GM12878 (cell line): ENCODE measurements at regions of chr17 and their contacts with region 1.

Region 1: DNA sequence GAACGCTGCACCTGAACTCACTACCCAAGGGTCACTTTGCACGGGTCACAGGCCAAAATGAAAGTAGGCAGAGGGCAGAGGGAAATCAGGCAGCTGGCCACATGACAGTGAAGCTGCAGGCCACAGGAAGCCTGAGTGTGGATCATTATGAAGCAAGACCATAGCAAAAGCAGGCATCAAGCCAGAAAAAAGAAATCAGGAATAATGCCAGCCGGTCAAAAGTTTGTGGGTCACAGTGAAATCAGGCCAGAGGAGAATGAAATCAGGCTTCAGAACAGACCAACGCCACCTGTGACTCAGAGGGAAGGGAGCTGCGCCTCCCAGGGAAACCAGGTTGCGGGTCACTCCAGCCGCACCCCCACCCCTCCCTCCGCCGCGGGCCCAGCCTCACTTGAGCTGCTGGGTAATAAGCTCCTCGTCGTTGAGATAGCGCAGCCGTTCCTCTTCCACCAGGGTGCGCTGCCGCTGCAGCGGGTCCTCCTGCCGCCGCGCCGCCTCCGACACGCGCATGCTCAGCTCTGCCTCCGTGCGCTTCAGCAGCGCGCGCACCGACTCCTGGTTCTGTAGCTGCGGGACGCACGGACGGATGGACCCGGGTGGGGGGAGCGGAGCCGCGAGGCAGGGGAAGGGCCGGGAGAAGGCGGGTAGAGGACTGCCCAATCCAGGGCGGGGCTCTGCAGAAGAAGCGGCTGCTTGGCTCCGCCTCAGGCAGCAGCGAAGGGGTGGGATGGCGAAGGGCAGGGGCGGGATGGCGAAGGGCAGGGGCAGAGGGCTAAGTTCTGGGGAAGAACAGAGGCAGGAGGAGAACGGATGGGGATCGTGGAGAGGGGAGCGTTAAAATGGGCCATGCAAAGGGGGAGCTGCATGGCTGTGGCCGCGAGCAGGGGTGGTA is 47.7 kb downstream of the SRCIN1 start:
- DNase-seq: peak; percentile 50
- ATAC-seq: peak; percentile 90
- H3K4me3 ChIP-seq: peak overlapping the region; percentile 60; the same call in 1 of the 2 replicates
- H3K27ac ChIP-seq: no peak overlapping the region
- H3K4me1 ChIP-seq: peaks cover 20% of the 10 kb centered on the region
- H3K27me3 ChIP-seq: peaks cover 15% of the 10 kb centered on the region in 2 experiments
- CTCF ChIP-seq: peak; percentile 93 to 99 (median 96); a peak in 5 of 6 replicates
- EP300 ChIP-seq: no peak
- POLR2A ChIP-seq: no peak
- RAD21 ChIP-seq: peak; percentile 69

Region 2: DNA sequence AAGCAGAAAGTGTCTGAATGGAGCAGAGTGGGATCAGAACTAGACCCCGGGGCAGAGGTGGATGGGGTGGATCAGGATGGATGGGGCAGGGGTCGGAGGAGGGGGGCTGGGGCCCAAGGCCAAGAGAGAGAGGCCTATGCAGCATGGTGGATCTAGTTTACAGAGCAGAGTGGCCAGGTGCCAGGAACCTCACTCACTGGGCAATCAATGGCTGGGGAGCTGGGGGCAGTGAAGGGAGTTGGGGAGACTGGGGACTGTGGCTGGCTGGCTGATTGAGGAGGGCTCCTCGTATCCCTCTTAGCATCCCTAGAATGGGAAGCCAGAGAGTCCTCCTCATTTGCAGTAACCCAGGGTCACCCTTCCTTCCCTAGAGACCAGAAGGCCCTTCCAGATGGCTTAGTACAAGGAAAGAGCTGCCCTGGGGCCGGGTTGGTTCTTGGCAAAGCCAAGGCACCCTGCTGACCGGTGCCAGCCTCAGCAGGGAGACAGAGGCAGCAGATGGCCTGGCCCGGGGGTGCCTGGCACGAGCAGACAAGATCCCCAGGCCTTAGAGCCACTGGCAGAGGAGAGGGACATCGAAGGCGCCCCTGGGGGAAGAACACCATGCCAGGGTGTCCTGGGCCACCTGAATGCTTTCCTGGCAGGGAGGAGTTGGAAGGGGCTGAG is 10.9 kb after region 1 on chr17:
- CTCF ChIA-PET with region 1: interaction called, 15 read pairs
- POLR2A ChIA-PET with region 1: interaction called, 8 read pairs
- RAD21 ChIA-PET with region 1: interaction called, 14 read pairs
- SMC1A ChIA-PET with region 1: interaction called, 3 read pairs
- in situ Hi-C with region 1: no loop called
- intact Hi-C with region 1: no loop called
- DNase-seq: no peak
- ATAC-seq: no peak
- H3K4me3 ChIP-seq: no peak overlapping the region
- H3K27ac ChIP-seq: no peak overlapping the region
- H3K4me1 ChIP-seq: peaks cover 8% of the 10 kb centered on the region
- H3K27me3 ChIP-seq: peaks cover 22 to 27% of the 10 kb centered on the region in 2 experiments
- CTCF ChIP-seq: no peak
- EP300 ChIP-seq: no peak
- POLR2A ChIP-seq: no peak
- RAD21 ChIP-seq: no peak

Region 3: DNA sequence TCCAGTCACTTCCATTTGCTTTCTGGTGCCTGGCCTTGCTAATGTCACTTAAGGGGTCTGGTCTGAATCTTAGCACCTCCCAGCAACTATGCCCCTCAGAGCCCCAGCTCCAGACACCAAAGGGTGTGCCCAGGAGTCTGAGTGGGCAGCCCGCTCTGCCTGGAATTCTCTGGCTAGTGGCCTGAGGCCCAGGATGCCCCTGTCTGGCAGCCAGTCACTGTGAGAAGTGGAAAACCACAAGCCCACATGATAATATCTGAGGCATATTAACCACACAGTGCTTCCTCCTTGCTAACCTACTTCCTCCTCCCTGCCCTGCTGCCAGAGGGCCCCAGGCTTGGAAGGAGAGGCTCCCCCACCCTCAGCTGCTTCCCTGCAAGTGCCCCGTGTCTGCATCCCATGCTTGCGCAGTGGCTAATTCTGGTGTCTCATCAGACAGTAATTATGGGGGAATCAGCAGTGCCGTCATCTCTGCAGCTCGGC is 33.7 kb after region 1 on chr17:
- CTCF ChIA-PET with region 1: interaction called, 176 read pairs
- POLR2A ChIA-PET with region 1: interaction called, 3 read pairs
- RAD21 ChIA-PET with region 1: interaction called, 130 read pairs
- SMC1A ChIA-PET with region 1: interaction called, 4 read pairs
- in situ Hi-C with region 1: no loop called
- intact Hi-C with region 1: no loop called
- DNase-seq: no peak
- ATAC-seq: peak; percentile 76
- H3K4me3 ChIP-seq: no peak overlapping the region
- H3K27ac ChIP-seq: no peak overlapping the region
- H3K4me1 ChIP-seq: peaks cover 26% of the 10 kb centered on the region
- H3K27me3 ChIP-seq: peaks cover 0 to 2% of the 10 kb centered on the region in 2 experiments; a peak in 2 of 4 replicates
- CTCF ChIP-seq: no peak
- EP300 ChIP-seq: no peak
- POLR2A ChIP-seq: no peak
- RAD21 ChIP-seq: no peak

Region 4: GRCh38 chr17:38605888-38606645 is 48.0 kb after region 1 on chr17 and contains the start of gene SRCIN1:
- CTCF ChIA-PET with region 1: interaction called, 32 read pairs
- POLR2A ChIA-PET with region 1: interaction called, 3 read pairs
- RAD21 ChIA-PET with region 1: interaction called, 6 read pairs
- SMC1A ChIA-PET with region 1: interaction called, 13 read pairs
- in situ Hi-C with region 1: no loop called
- intact Hi-C with region 1: no loop called
- DNase-seq: no peak
- ATAC-seq: peak; percentile 58
- H3K4me3 ChIP-seq: peak within 1 kb of the TSS; percentile 82
- H3K27ac ChIP-seq: no peak within 1 kb of the TSS
- H3K4me1 ChIP-seq: peaks cover 11% of the 10 kb centered on the region
- H3K27me3 ChIP-seq: peaks cover 0 to 14% of the 10 kb centered on the region in 2 experiments; a peak in 2 of 4 replicates
- CTCF ChIP-seq: peak; percentile 97 to 99 (median 98)
- EP300 ChIP-seq: no peak
- POLR2A ChIP-seq: peak; percentile 39; the same call in 1 of the 2 replicates
- RAD21 ChIP-seq: peak; percentile 47
- polyA plus RNA-seq, gene SRCIN1: not detected

Region 5: GRCh38 chr17:38674749-38675615 is 116.9 kb after region 1 on chr17 and contains the start of gene EPOP:
- CTCF ChIA-PET with region 1: interaction called, 492 read pairs
- POLR2A ChIA-PET with region 1: no interaction called
- RAD21 ChIA-PET with region 1: interaction called, 294 read pairs
- SMC1A ChIA-PET with region 1: interaction called, 227 read pairs
- in situ Hi-C with region 1: no loop called
- intact Hi-C with region 1: no loop called
- DNase-seq: no peak
- ATAC-seq: peak; percentile 88
- H3K4me3 ChIP-seq: peak within 1 kb of the TSS; percentile 84
- H3K27ac ChIP-seq: no peak within 1 kb of the TSS
- H3K4me1 ChIP-seq: peaks cover 34% of the 10 kb centered on the region
- H3K27me3 ChIP-seq: peaks cover 8 to 12% of the 10 kb centered on the region in 2 experiments; a peak in 2 of 4 replicates
- CTCF ChIP-seq: no peak
- EP300 ChIP-seq: no peak
- POLR2A ChIP-seq: peak; percentile 62
- RAD21 ChIP-seq: no peak
- polyA plus RNA-seq, gene EPOP: 0.53 to 1.4 TPM

Region 6: DNA sequence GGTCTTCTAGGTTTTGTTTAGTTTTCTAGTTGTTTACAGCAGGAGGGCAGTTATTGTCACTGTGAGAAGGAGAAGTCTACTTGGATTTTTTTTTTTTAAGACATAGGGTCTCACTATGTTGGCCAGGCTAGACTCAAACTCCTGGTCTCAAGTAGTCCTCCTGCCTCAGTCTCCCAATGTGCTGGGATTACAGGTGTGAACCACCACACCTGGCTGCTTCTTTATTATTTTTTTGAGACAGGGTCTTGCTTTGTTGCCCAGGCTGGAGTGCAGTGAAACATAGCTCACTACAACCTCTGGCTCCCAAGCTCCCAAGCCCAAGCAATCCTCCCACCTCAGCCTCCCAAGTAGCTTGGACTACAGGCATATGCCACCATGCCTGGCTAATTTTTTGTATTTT is 736.0 kb after region 1 on chr17:
- CTCF ChIA-PET with region 1: no interaction called
- POLR2A ChIA-PET with region 1: interaction called, 10 read pairs
- RAD21 ChIA-PET with region 1: no interaction called
- SMC1A ChIA-PET with region 1: no interaction called
- in situ Hi-C with region 1: no loop called
- intact Hi-C with region 1: no loop called
- DNase-seq: no peak
- ATAC-seq: no peak
- H3K4me3 ChIP-seq: no peak overlapping the region
- H3K27ac ChIP-seq: no peak overlapping the region
- H3K4me1 ChIP-seq: no peaks in the 10 kb centered on the region
- H3K27me3 ChIP-seq: no peaks in the 10 kb centered on the region
- CTCF ChIP-seq: no peak
- EP300 ChIP-seq: no peak
- POLR2A ChIP-seq: no peak
- RAD21 ChIP-seq: no peak